ENCODE measurements at regions of chr12 and their contacts with region 1.

Region 1: DNA sequence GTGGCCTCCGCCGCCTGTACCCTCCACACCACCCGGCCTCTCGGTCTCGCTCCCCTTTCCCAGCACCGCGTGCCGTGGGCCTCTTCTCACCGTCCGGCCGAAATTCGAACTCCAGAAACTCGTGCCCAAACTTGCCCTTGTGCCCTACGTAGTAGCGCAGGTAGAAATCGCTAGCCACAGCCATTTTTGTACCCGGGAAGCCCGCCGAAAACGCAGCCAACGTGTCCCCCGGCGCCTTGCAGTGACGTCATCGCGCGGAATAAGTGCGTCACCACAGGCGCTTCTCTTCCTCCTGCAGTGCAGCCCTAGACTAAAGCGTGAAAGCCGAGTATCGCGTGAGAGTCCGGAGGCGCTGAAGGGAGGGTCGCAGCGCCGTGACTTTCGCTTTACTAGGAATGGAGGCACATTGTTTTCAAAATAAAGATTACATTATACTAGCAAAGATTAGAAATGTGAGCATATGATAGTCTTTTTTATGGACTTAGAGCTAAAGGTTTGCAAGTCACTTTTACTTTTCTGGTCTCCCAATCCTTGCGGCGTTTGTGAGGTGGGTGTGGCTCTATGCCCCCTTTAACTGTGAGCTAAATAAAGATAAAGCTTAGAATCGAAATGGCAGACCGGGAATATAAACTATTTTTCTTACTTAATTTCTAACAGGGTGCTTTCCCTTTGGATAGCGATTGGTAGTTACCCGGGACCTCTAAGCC is at the start of gene MAGOHB:
- DNase-seq: peak; percentile 97
- ATAC-seq: peak; percentile 99
- total RNA-seq, gene MAGOHB: 14.8 TPM

Region 2: DNA sequence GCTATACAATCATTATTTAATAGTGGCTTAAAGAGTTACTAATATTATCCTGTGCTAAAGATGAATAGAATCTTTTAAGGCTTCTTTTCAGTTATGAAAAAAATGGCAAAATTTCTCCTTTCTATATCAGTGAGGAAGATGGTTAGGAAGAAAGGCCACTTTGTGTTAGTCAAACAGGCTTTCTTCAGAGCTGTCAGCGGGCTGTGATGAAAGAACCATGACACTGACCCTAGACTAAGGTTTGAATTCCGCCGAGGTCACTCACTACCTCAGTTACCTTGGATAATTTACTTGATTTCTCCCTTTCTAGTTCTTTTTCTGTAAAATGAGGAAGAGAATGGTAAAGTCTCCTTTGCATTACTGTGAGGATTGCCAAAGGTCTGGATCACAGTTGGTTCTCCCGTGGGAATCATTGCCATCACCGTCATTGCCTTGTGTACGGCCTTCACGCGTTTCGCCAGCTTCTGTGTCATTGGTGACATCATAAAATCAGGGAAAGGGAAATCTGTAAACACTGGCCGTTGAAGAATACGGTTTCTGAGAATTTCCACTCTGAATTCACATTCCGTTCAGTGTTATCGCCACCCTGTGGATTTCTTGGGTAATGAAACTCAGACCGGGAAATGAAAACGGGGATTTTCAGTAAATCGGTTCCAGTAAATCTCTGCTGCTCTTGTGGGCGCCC is 136.3 kb after region 1 on chr12:
- intact Hi-C with region 1: loop called (anchors 2 kb)
- DNase-seq: peak; percentile 61
- ATAC-seq: peak; percentile 94

Region 3: GRCh38 chr12:10974965-10975364 is 361.5 kb after region 1 on chr12:
- intact Hi-C with region 1: no loop called
- DNase-seq: no peak
- ATAC-seq: no peak